ENCODE measurements at regions of chr2 and their contacts with region 1.

Region 1: GRCh38 chr2:218727502-218728165 is 17.0 kb downstream of the TTLL4 start:
- DNase-seq: peak; percentile 47
- H3K4me3 ChIP-seq: no peak overlapping the region
- H3K27ac ChIP-seq: no peak overlapping the region
- H3K4me1 ChIP-seq: peaks cover 26% of the 10 kb centered on the region
- H3K27me3 ChIP-seq: no peaks in the 10 kb centered on the region

Region 2: GRCh38 chr2:218679119-218679518 is 48.5 kb before region 1 on chr2:
- in situ Hi-C with region 1: no loop called
- DNase-seq: peak; percentile 54
- H3K4me3 ChIP-seq: no peak overlapping the region
- H3K27ac ChIP-seq: no peak overlapping the region
- H3K4me1 ChIP-seq: no peaks in the 10 kb centered on the region
- H3K27me3 ChIP-seq: no peaks in the 10 kb centered on the region

Region 3: DNA sequence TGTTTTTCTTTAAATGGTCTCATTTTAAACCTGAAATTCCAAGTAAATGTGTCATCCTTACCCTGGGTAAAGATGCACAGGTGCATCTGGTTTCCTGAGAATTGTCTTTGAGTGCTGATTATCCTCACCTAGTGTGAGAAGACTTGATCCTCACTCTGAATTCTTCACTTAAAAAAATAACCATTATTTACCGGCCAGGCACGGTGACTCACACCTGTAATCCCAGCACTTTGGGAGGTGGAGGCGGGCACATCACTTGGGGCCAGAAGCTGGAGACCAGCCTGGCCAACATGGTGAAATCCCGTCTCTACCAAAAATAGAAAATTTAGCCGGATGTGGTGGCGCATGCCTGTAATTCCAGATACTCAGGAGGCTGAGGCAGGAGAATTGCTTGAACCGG is 122.1 kb after region 1 on chr2:
- in situ Hi-C with region 1: loop called (anchors 10 kb)
- DNase-seq: no peak
- H3K4me3 ChIP-seq: no peak overlapping the region
- H3K27ac ChIP-seq: no peak overlapping the region
- H3K4me1 ChIP-seq: no peaks in the 10 kb centered on the region
- H3K27me3 ChIP-seq: no peaks in the 10 kb centered on the region

Region 4: GRCh38 chr2:219020604-219021365 is 293.2 kb after region 1 on chr2:
- in situ Hi-C with region 1: no loop called
- DNase-seq: no peak
- H3K4me3 ChIP-seq: no peak overlapping the region
- H3K27ac ChIP-seq: no peak overlapping the region
- H3K4me1 ChIP-seq: no peaks in the 10 kb centered on the region
- H3K27me3 ChIP-seq: peaks cover 30% of the 10 kb centered on the region

Measured in GM23248 (cell line).